Posterior cingulate gyrus (tissue), 11 donors: ENCODE measurements at regions of chr19 and their contacts with region 1.

Region 1: DNA sequence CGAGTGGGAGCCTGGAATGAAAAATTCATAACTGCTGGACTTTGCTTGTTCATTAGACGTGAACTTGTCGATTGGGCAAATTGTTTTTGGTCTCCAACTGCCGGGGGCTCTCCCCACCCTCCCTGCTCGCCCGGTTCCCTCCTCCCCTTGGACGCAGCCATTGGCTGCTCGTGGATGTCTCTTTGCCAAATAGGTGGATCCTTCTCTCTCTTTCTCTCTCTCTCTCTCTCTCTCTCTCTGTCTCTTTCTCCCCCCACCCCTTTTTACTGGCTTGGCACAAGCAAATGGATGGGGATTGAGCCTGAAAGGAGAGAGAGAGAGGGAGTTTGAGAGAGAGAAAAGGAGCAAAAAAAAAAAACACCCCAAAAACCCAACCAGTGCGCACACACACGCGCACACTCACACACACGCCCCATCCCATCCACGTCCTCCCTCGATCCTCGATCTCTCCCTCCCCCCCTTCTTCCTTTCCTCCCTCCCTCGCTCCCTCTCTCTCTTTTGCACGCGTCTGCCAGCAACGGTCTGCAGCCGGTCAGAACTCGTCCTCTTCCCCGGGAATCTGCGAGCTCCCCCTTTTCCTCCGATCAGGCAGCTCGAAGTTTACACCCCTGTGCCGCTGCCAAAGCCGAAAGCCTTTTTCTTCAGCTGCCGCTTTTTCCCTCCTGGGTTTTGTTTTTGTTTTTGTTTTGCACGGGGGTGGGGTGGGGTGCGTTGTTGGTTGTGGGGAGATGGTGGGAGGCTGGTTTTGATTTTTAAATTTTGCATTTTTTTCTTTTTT is 27.8 kb downstream of the NFIX start:
- DNase-seq: peak; percentile 74 to 97 (median 85)

Region 2: DNA sequence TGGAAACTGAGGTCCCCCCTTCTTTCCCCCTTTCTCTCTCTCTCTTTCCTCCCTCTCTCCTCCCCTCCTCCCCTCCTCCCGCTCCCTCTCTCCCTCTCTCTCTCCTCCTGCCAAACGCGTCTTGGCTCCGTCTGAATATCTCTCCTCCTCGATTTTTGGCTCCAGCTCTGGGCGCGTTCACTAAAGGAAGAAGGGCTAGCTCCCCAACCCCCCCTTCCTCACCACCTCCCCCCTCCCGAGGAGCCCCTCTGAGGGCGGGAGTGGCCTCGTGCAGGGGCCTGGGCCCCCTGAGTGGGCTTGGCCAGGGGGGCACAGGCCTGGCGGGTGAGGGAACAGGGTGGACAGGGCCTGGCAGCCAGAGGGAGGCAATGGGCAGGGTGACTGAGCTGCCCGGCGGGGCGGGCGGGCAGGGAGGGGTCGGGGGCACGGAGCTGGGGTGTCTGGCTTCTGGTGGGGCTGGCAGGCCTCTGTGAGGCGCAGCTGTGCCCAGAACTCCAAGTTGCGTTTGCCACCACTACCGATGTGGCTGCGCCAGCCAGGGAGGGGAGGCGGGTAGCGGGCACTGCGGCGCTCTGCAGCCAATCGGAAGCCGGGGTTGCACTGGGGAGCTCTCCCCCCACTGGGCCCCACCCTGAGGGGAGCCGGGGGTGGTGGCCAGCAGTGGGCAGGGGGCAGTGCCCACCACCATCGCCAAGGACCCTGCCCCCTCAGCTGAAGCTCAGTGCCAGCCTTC is 20.7 kb before region 1 on chr19:
- intact Hi-C with region 1: loop called (anchors 2 kb)
- DNase-seq: peak; percentile 84 to 99 (median 91)